WTC11 (cell line): ENCODE measurements at regions of chr2 and their contacts with region 1.

Region 1: GRCh38 chr2:219430633-219431615 is 3.7 kb upstream of the SPEG start:
- DNase-seq: no peak
- ATAC-seq: peak; percentile 36
- H3K4me3 Mint-ChIP-seq: no peak overlapping the region
- H3K27ac Mint-ChIP-seq: peak overlapping the region; percentile 69; the same call in 1 of the 2 replicates
- H3K4me1 Mint-ChIP-seq: peaks cover 8% of the 10 kb centered on the region
- H3K27me3 Mint-ChIP-seq: peaks cover 20% of the 10 kb centered on the region
- CTCF ChIP-seq: no peak

Region 2: GRCh38 chr2:219418155-219418569 is 12.8 kb before region 1 on chr2 and contains the start of gene DES:
- CTCF ChIA-PET with region 1: interaction called, 59 read pairs
- POLR2A ChIA-PET with region 1: interaction called, 4 read pairs
- DNase-seq: no peak
- ATAC-seq: no peak
- H3K4me3 Mint-ChIP-seq: peak within 1 kb of the TSS; percentile 37
- H3K27ac Mint-ChIP-seq: no peak within 1 kb of the TSS
- H3K4me1 Mint-ChIP-seq: peaks cover 28% of the 10 kb centered on the region
- H3K27me3 Mint-ChIP-seq: peaks cover 38% of the 10 kb centered on the region
- CTCF ChIP-seq: no peak
- total RNA-seq, gene DES: 1.6 to 3.5 TPM (median 2.8 TPM) in 3 replicates

Region 3: DNA sequence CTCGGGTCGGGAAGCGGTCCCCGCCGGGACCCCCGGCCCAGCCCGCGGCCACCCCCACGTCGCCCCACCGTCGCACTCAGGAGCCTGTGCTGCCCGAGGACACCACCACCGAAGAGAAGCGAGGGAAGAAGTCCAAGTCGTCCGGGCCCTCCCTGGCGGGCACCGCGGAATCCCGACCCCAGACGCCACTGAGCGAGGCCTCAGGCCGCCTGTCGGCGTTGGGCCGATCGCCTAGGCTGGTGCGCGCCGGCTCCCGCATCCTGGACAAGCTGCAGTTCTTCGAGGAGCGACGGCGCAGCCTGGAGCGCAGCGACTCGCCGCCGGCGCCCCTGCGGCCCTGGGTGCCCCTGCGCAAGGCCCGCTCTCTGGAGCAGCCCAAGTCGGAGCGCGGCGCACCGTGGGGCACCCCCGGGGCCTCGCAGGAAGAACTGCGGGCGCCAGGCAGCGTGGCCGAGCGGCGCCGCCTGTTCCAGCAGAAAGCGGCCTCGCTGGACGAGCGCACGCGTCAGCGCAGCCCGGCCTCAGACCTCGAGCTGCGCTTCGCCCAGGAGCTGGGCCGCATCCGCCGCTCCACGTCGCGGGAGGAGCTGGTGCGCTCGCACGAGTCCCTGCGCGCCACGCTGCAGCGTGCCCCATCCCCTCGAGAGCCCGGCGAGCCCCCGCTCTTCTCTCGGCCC is 17.3 kb after region 1 on chr2:
- CTCF ChIA-PET with region 1: interaction called, 30 read pairs
- POLR2A ChIA-PET with region 1: no interaction called
- DNase-seq: peak; percentile 69
- ATAC-seq: peak; percentile 43
- H3K4me3 Mint-ChIP-seq: peak overlapping the region; percentile 33; the same call in 1 of the 2 replicates
- H3K27ac Mint-ChIP-seq: no peak overlapping the region
- H3K4me1 Mint-ChIP-seq: peaks cover 13% of the 10 kb centered on the region
- H3K27me3 Mint-ChIP-seq: peaks cover 7% of the 10 kb centered on the region
- CTCF ChIP-seq: no peak

Region 4: GRCh38 chr2:219484343-219485200 is 53.6 kb after region 1 on chr2:
- CTCF ChIA-PET with region 1: interaction called, 11 read pairs
- POLR2A ChIA-PET with region 1: no interaction called
- DNase-seq: peak; percentile 65
- ATAC-seq: peak; percentile 20
- H3K4me3 Mint-ChIP-seq: peak overlapping the region; percentile 52
- H3K27ac Mint-ChIP-seq: no peak overlapping the region
- H3K4me1 Mint-ChIP-seq: peaks cover 35% of the 10 kb centered on the region
- H3K27me3 Mint-ChIP-seq: peaks cover 32% of the 10 kb centered on the region
- CTCF ChIP-seq: no peak

Region 5: GRCh38 chr2:219530048-219530963 is 99.4 kb after region 1 on chr2:
- CTCF ChIA-PET with region 1: interaction called, 30 read pairs
- POLR2A ChIA-PET with region 1: no interaction called
- DNase-seq: peak; percentile 92
- ATAC-seq: peak; percentile 75
- H3K4me3 Mint-ChIP-seq: peak overlapping the region; percentile 60
- H3K27ac Mint-ChIP-seq: no peak overlapping the region
- H3K4me1 Mint-ChIP-seq: peaks cover 30% of the 10 kb centered on the region
- H3K27me3 Mint-ChIP-seq: peaks cover 56% of the 10 kb centered on the region
- CTCF ChIP-seq: peak; percentile 88